Mammary epithelial cell (primary cell): ENCODE measurements at regions of chr5 and their contacts with region 1.

Region 1: GRCh38 chr5:55159763-55160492 is at the start of gene GPX8:
- DNase-seq: peak; percentile 78
- H3K4me3 ChIP-seq: peak within 1 kb of the TSS; percentile 56 to 93 (median 92)
- H3K27ac ChIP-seq: peak within 1 kb of the TSS; percentile 90
- H3K4me1 ChIP-seq: peaks cover 8% of the 10 kb centered on the region
- H3K27me3 ChIP-seq: no peaks in the 10 kb centered on the region
- CTCF ChIP-seq: peak; percentile 49 to 63
- total RNA-seq, gene GPX8: 38.0 to 38.8 TPM

Region 2: GRCh38 chr5:54905943-54906537 is 253.9 kb before region 1 on chr5:
- CTCF ChIA-PET with region 1: interaction called, 25 read pairs
- dilution Hi-C with region 1: no loop called
- in situ Hi-C with region 1: loop called (anchors 5 to 10 kb)
- intact Hi-C with region 1: loop called (anchors 1 kb)
- DNase-seq: peak; percentile 38
- H3K4me3 ChIP-seq: no peak overlapping the region
- H3K27ac ChIP-seq: no peak overlapping the region
- H3K4me1 ChIP-seq: no peaks in the 10 kb centered on the region
- H3K27me3 ChIP-seq: no peaks in the 10 kb centered on the region
- CTCF ChIP-seq: peak; percentile 74 to 76

Region 3: DNA sequence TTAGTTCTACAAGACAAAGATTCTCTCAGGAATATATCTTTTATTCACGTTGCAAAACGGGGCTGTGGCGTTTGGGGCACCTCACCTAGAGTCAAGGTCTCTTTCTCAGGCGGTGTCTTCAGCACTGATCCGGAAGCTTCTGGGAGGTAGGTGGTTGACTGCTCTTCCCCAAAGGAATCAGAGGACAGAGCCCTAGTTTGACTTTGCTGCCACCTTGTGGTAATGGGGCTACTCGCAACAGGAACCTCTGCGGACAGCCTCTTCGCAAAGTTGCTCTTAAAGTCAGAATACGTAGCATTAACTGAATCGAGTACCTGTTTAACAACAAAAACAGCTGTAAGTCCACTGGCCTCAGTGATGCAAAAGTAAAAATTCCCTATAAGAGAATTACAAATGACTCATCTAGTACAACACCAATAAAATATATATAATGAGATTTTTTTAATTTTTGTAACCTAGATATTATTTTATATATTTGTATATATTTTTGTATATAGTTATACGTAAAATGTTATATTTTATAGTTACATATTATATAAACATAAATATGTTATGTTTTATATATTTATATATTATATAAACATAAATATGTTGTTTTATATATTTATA is 13.3 kb before region 1 on chr5:
- CTCF ChIA-PET with region 1: interaction called, 4 read pairs
- dilution Hi-C with region 1: no loop called
- in situ Hi-C with region 1: no loop called
- intact Hi-C with region 1: loop called (anchors 2 kb)
- DNase-seq: peak; percentile 77
- H3K4me3 ChIP-seq: no peak overlapping the region
- H3K27ac ChIP-seq: no peak overlapping the region
- H3K4me1 ChIP-seq: no peaks in the 10 kb centered on the region
- H3K27me3 ChIP-seq: no peaks in the 10 kb centered on the region
- CTCF ChIP-seq: peak; percentile 89 to 98